Endothelial cell of umbilical vein (primary cell): ENCODE measurements at regions of chr6 and their contacts with region 1.

Region 1: DNA sequence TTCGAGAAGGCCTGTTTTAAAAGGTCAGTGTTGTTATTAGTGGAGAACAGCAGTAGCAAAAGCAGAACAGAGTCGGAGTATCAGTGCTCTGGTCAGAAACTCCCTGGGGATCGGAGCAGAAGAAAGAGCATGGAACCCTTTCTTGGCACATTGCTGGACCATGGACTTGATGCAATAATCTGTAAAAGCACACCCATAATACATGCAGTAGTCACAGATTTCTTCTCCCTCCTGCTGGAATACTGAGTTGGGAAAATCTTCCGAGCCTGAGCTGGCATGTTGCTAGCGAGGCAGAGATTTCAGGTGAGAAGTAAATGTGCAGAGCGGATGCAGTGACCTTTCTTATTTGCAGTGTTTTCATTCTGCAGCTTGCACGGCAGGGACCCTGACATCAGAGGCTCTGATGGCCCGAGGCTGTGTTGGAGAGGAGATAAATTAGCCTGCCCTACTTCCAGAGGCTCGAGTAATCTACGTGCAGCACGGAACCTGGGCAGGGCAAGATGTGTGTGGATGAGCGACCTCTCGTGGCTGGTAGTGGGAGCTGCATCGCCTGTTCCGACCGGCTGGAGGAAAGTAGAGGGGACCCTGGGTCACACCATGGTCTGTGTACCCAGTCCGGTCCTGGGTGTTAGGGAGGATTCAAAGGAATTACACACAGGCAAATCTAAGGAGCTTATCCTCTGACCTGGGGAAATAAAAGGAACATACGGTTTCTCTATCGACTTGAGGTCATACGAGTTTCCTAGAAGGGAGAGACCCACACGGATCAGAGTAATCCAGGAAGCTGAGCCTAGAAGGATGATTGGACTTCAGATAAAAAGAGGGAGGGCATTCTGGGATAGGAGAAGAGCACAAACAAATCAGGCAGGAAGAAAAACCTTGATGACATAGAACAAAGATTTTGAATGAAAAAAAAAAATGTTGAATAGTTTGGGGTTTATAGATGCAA is 137.0 kb upstream of the STMND1 start:
- DNase-seq: peak; percentile 66
- H3K4me3 ChIP-seq: no peak overlapping the region
- H3K27ac ChIP-seq: no peak overlapping the region
- H3K4me1 ChIP-seq: peaks cover 11% of the 10 kb centered on the region
- H3K27me3 ChIP-seq: peaks cover 0 to 2% of the 10 kb centered on the region in 2 experiments
- CTCF ChIP-seq: peak; percentile 94 to 97
- POLR2A ChIP-seq: no peak

Region 2: DNA sequence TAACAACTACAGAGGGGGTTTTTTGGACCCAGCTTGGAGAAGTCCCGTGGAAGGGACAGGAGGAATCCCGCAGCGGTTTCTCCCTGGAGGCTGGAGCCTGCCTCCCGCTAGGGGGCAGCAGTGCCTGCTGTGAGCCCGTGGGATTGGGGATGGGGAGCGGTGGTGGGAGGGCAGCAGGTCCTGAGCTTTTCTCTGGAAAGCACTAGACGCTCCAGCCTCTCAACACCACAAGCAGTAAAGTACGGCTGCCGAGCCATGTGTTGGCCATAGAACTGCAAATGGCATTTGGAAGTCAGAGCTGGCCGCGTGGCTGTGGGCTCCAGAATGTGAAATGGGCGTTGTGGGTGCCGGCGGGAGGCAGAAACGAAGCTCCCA is 678.7 kb before region 1 on chr6:
- CTCF ChIA-PET with region 1: interaction called, 7 read pairs
- POLR2A ChIA-PET with region 1: no interaction called
- dilution Hi-C with region 1: no loop called
- intact Hi-C with region 1: loop called (anchors 5 kb)
- DNase-seq: peak; percentile 19
- H3K4me3 ChIP-seq: no peak overlapping the region
- H3K27ac ChIP-seq: no peak overlapping the region
- H3K4me1 ChIP-seq: peaks cover 2% of the 10 kb centered on the region
- H3K27me3 ChIP-seq: no peaks in the 10 kb centered on the region
- CTCF ChIP-seq: peak; percentile 64 to 82
- POLR2A ChIP-seq: no peak

Region 3: GRCh38 chr6:16514249-16514648 is 450.6 kb before region 1 on chr6:
- CTCF ChIA-PET with region 1: interaction called, 11 read pairs
- POLR2A ChIA-PET with region 1: no interaction called
- dilution Hi-C with region 1: no loop called
- intact Hi-C with region 1: loop called (anchors 5 kb)
- DNase-seq: peak; percentile 60
- H3K4me3 ChIP-seq: no peak overlapping the region
- H3K27ac ChIP-seq: no peak overlapping the region
- H3K4me1 ChIP-seq: peaks cover 6% of the 10 kb centered on the region
- H3K27me3 ChIP-seq: no peaks in the 10 kb centered on the region
- CTCF ChIP-seq: peak; percentile 36 to 55
- POLR2A ChIP-seq: no peak

Region 4: DNA sequence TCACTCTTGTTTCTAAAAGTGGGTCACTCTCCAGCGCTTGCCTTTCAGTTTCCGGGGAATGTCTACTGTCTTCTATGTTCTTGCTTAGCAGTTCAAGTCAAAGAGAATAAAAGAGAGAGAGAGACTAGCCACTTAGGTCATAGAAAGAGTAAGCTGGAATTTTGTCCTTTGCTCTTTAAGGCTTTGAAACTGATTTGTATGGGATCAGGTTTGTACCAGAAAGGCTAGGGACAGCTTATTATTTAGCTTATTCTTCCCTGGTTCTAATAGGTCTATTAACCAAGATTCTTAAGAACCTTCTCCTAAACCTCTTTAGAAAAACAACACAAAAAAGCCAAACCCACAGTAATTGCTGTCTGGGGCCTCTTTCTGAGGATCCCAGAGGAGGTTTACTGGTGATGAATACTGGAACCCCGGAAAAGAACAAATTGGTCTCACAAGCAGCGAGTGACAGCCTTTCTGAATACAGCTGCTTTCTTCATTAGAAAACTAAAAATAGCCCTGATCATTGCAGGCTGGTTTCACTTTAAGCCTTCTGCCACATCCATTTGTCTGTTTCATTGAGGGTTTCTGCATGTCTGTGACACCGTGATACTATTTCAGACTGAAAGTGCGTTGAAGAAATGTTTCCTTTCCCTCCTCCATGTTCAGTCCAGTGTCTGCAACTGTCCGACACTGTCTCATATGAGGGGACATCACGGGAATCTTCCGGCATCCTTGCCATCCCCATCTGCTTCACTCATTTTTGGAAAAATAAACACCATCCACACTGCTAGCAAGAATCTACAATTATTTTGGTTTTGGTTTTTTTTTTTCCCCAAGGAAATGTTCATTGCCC is 128.5 kb before region 1 on chr6:
- CTCF ChIA-PET with region 1: no interaction called
- POLR2A ChIA-PET with region 1: no interaction called
- dilution Hi-C with region 1: no loop called
- intact Hi-C with region 1: no loop called
- DNase-seq: no peak
- H3K4me3 ChIP-seq: no peak overlapping the region
- H3K27ac ChIP-seq: no peak overlapping the region
- H3K4me1 ChIP-seq: no peaks in the 10 kb centered on the region
- H3K27me3 ChIP-seq: peaks cover 0 to 2% of the 10 kb centered on the region in 2 experiments
- CTCF ChIP-seq: no peak
- POLR2A ChIP-seq: no peak

Region 5: DNA sequence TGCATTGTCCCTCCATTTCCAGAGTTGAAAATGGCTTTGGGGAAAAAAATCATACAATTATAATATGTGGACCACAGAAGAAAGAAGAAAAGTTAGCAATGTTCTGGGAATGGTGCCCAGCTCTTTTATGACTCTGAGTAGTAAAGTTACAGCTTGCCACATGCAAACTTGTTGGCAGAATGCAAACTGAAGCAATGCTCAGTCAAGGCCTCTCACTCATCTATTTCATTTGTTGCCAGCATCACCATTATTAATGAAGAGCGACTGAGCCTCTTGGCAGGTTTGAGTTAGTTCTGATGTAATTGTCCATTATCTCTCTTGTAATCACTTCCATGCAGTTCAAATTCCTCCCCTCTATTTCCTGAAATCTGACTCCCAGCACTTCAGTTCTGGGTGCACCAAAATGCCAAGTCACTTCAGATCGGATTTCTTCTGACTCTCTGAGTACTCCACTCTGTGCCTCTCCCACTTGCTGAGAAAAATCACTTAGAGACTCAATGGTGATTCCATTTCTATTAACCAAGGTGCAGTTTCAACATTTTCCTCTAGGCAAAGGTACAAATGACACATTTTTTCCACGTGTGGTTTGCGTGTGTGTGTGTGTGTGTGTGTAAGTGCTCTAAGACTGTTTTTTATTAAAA is 17.3 kb before region 1 on chr6:
- CTCF ChIA-PET with region 1: interaction called, 41 read pairs
- POLR2A ChIA-PET with region 1: no interaction called
- dilution Hi-C with region 1: no loop called
- intact Hi-C with region 1: no loop called
- DNase-seq: peak; percentile 77
- H3K4me3 ChIP-seq: no peak overlapping the region
- H3K27ac ChIP-seq: no peak overlapping the region
- H3K4me1 ChIP-seq: peaks cover 11% of the 10 kb centered on the region
- H3K27me3 ChIP-seq: peaks cover 0 to 2% of the 10 kb centered on the region in 2 experiments
- CTCF ChIP-seq: no peak
- POLR2A ChIP-seq: no peak

Region 6: DNA sequence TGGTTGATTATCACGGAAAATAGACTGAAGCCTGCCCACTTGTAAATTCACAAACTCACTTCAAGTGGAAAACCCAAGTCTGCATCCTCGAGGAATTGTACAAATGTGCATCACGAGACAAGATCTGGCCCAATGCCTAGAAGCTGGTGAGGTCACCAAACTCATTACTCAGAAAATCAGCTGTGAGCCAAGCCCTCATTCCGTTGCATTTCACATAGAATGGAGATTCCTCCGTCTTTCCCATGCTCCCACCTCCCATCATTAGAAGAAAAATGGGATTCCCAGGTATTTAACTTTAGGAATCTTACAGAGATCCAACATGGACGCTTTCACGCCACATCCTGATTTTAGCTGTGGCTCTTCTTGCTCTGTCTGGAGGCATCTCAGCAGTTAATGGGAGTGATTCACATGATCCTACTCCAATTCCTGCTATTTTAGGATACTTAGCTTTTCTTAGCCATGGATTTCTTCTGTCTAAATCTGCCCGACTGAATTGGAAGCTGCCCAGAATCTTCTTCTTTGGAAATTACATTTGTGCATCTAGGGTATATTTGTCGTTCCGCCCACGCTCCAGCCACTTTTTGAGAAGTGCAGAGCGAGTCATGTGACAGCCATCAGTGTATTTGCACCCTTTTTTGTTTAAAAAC is 68.3 kb after region 1 on chr6:
- CTCF ChIA-PET with region 1: interaction called, 4 read pairs
- POLR2A ChIA-PET with region 1: no interaction called
- dilution Hi-C with region 1: no loop called
- intact Hi-C with region 1: loop called (anchors 5 kb)
- DNase-seq: peak; percentile 95
- H3K4me3 ChIP-seq: no peak overlapping the region
- H3K27ac ChIP-seq: peak overlapping the region; percentile 69
- H3K4me1 ChIP-seq: peaks cover 14% of the 10 kb centered on the region
- H3K27me3 ChIP-seq: peaks cover 5 to 15% of the 10 kb centered on the region in 2 experiments
- CTCF ChIP-seq: no peak
- POLR2A ChIP-seq: no peak